WTC11 (cell line): ENCODE measurements at regions of chrX and their contacts with region 1.

Region 1: GRCh38 chrX:18674788-18675735 is 3.2 kb upstream of the RS1 start:
- DNase-seq: peak; percentile 67
- ATAC-seq: peak; percentile 75
- H3K4me3 Mint-ChIP-seq: peak overlapping the region; percentile 70
- H3K27ac Mint-ChIP-seq: no peak overlapping the region
- H3K4me1 Mint-ChIP-seq: peaks cover 11% of the 10 kb centered on the region
- H3K27me3 Mint-ChIP-seq: no peaks in the 10 kb centered on the region
- CTCF ChIP-seq: no peak

Region 2: DNA sequence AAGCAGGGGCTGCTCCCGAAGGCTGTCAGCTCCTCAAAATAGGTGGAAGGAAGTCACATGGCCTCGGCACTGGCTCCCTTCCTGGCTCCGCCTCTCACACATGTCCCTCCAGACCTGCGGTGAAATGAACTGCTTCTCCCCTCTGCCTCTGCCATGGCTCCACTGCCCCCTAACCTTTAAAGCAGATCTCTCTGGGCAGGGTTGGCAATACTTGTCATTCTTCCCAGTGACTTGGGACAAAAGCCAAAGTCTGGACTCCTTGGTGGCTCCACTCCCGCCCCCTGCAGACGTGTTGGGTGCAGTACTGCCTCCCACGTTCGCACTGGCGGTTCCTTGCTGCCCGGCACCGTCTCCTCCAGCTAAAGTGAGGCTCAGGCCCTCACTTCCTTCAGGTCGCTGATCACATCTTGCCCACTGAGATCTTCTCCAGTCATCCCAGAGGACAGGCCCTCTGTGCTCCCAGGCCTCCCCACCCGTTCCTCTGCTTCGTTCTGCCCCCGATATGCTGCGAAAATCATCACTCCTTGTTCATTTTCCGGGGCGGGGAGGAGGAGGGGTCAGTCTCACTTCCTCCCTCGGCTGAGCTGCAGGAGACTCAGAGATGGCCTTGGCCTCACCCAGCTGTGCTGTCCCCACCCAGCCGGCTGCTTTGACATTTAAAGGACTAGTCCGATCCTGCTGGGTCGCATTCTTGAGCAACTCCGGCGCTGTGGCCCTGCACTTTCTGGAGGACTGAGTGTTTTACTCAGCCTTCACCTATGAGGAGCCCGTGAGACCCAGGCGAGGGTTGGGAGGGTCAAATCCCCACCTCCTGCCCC is 211.5 kb after region 1 on chrX:
- CTCF ChIA-PET with region 1: interaction called, 13 read pairs
- POLR2A ChIA-PET with region 1: no interaction called
- DNase-seq: peak; percentile 48
- ATAC-seq: peak; percentile 56
- H3K4me3 Mint-ChIP-seq: peak overlapping the region; percentile 74
- H3K27ac Mint-ChIP-seq: peak overlapping the region; percentile 74; the same call in 1 of the 2 replicates
- H3K4me1 Mint-ChIP-seq: peaks cover 39% of the 10 kb centered on the region
- H3K27me3 Mint-ChIP-seq: no peaks in the 10 kb centered on the region
- CTCF ChIP-seq: 0 out of 2 replicates have a peak, but pooled peaks have one; percentile 13